Activated CD8-positive, alpha-beta T cell treated with anti-CD3 and anti-CD28 coated beads, Interleukin-2, amount 10 ng/mL, durations not matched to agents 7 days and 5 days (primary cell): ENCODE measurements at regions of chr12 and their contacts with region 1.

Region 1: DNA sequence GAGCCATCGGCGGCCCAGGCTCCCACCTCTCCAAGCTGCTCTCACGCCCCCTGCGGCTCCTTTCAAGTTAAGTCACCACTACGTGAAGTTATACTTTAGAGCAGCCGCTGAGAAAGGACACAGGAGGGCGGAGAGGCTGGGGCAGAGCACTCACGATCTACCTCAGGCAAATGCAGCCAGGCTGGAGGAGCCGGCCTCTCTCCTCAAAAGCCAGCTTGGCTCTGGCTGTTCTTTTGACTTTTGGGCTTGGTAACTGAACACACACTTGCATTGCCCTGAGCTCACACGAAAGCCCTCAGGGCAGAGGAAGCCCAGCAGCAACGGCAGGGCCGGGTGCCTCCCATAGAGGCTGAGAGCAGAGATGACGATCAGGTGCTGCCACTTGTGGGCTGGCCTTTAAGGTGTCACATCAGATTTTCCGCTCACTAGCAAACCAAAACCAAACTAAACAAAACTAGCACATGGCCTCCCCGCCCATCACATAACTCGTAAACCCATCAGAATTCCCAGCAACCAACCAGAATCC is 75.2 kb downstream of the PITPNM2 start:
- DNase-seq: peak; percentile 90
- ATAC-seq: peak; percentile 86
- H3K4me3 Mint-ChIP-seq: peak overlapping the region; percentile 82
- H3K27ac Mint-ChIP-seq: peak overlapping the region; percentile 98
- H3K4me1 Mint-ChIP-seq: peaks cover 55% of the 10 kb centered on the region
- H3K27me3 Mint-ChIP-seq: no peaks in the 10 kb centered on the region

Region 2: GRCh38 chr12:122974274-122974891 is 101.3 kb before region 1 on chr12:
- CTCF ChIA-PET with region 1: interaction called, 5 read pairs
- POLR2A ChIA-PET with region 1: interaction called, 21 read pairs
- DNase-seq: peak; percentile 99
- ATAC-seq: peak; percentile 84
- H3K4me3 Mint-ChIP-seq: peak overlapping the region; percentile 99
- H3K27ac Mint-ChIP-seq: peak overlapping the region; percentile 100
- H3K4me1 Mint-ChIP-seq: peaks cover 40% of the 10 kb centered on the region
- H3K27me3 Mint-ChIP-seq: no peaks in the 10 kb centered on the region

Region 3: GRCh38 chr12:123043536-123044001 is 32.1 kb before region 1 on chr12:
- CTCF ChIA-PET with region 1: interaction called, 68 read pairs
- POLR2A ChIA-PET with region 1: interaction called, 35 read pairs
- DNase-seq: peak; percentile 90
- ATAC-seq: peak; percentile 99
- H3K4me3 Mint-ChIP-seq: peak overlapping the region; percentile 26
- H3K27ac Mint-ChIP-seq: peak overlapping the region; percentile 77
- H3K4me1 Mint-ChIP-seq: peaks cover 36% of the 10 kb centered on the region
- H3K27me3 Mint-ChIP-seq: no peaks in the 10 kb centered on the region

Region 4: DNA sequence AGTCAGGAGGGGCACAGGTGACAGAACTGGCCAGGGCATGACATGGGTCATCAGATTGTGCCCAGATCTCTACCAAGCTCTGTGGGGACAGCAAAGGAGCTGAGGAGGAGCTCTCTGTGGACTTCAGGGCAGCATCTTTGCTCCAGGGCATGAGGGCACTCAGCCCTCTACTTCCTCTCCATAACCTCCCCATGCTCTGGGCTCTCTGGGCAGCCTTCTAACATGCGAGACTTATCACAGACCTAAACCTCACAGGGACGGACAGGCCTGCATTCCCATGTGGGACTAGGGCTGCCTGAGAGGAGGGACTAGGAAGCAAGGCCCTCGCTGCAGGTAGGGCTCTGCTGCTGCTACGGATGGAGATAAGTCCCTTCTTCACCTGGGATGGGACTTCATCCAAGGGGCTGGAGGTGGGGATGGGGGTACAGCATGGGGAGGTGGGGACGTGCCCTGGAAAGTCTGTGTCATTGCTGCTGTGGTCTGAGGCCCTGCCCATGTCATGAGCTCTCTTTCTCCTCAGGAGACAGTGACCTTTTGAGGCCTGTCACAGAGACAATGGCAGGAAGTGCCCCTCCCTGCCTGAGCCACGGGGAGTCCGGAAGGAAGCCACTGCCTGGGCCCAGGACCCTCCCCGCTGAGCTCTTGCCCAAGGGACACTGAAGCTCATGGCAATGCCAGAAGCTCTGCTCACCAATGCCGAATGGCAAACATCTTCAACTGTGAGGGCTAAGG is 31.1 kb after region 1 on chr12:
- CTCF ChIA-PET with region 1: interaction called, 28 read pairs
- POLR2A ChIA-PET with region 1: interaction called, 26 read pairs
- DNase-seq: peak; percentile 86
- ATAC-seq: peak; percentile 92
- H3K4me3 Mint-ChIP-seq: peak overlapping the region; percentile 62
- H3K27ac Mint-ChIP-seq: peak overlapping the region; percentile 98
- H3K4me1 Mint-ChIP-seq: peaks cover 70% of the 10 kb centered on the region
- H3K27me3 Mint-ChIP-seq: no peaks in the 10 kb centered on the region

Region 5: DNA sequence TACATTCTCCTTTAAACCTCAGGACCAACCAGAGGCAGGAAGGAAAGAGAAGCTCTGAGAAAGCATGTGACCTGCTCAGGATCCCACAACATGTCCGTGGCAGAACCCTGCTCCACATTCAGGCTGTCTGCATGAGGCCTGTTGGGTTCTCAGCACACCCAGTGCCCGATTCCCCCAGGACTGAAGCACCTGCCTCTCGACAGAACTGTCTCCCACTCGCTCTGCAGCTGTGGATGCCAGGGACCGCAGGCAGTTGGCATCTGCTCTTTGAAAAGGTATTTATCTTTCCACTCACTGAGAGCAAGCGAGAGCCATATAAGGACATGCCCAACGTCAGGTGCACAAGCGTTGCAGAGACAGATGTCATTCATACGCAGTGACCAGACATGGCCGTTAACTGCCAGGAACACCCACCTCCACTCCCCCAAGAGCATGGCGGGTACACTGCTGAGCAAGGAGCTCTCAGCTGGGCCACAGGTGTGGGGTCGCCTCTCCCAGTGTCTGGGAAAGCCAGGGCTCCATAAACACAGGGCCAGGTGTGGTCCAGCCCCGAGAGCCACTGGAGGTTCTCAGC is 56.3 kb after region 1 on chr12:
- CTCF ChIA-PET with region 1: interaction called, 5 read pairs
- POLR2A ChIA-PET with region 1: interaction called, 23 read pairs
- DNase-seq: peak; percentile 58
- ATAC-seq: peak; percentile 87
- H3K4me3 Mint-ChIP-seq: peak overlapping the region; percentile 55
- H3K27ac Mint-ChIP-seq: peak overlapping the region; percentile 89
- H3K4me1 Mint-ChIP-seq: peaks cover 33% of the 10 kb centered on the region
- H3K27me3 Mint-ChIP-seq: no peaks in the 10 kb centered on the region